Testis (tissue), 5 donors: ENCODE measurements at regions of chr11 and their contacts with region 1.

Region 1: DNA sequence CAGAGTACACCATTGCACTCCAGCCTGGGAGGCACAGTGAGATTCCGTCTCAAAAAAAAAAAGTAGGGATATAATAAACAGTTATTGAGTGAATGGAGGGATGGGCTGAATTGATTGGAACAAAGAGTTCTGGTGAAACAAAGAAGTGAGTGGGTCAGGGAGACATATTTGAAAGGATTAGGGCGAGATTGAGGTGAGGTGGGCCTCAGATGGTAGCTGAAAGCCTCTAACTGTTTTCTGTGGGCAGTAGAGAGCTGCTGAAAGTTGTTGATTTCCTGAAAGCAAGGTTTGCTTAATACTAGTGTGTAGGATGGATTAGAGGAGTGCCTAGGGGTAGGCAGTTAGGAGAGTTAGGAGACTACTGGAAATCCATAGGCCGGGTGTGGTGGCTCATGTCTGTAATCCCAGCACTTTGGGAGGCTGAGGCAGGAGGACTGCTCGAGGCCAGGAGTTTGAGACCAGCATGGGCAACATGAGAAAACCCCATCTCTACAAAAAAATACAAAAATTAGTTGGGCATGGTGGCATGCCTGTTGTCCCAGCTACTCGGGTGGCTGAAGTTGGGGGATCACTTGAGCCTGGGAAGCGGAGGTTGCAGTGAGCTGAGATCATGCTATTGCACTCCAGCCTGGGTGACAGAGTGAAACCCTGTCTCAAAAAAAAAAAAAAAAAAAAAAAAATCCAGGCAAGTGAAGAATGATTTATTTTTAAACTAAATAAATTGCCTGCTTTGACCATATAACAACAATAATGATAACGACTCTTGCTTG is 41.4 kb upstream of the PTPRJ start:
- DNase-seq: no peak
- H3K4me3 ChIP-seq: no peak overlapping the region
- H3K27ac ChIP-seq: no peak overlapping the region
- H3K4me1 ChIP-seq: no peaks in the 10 kb centered on the region
- H3K27me3 ChIP-seq: no peaks in the 10 kb centered on the region
- CTCF ChIP-seq: no peak
- POLR2A ChIP-seq: no peak

Region 2: GRCh38 chr11:48001438-48002021 is 62.6 kb after region 1 on chr11:
- intact Hi-C with region 1: no loop called
- DNase-seq: no peak
- H3K4me3 ChIP-seq: no peak overlapping the region
- H3K27ac ChIP-seq: no peak overlapping the region
- H3K4me1 ChIP-seq: no peaks in the 10 kb centered on the region
- H3K27me3 ChIP-seq: no peaks in the 10 kb centered on the region
- CTCF ChIP-seq: no peak
- POLR2A ChIP-seq: no peak

Region 3: DNA sequence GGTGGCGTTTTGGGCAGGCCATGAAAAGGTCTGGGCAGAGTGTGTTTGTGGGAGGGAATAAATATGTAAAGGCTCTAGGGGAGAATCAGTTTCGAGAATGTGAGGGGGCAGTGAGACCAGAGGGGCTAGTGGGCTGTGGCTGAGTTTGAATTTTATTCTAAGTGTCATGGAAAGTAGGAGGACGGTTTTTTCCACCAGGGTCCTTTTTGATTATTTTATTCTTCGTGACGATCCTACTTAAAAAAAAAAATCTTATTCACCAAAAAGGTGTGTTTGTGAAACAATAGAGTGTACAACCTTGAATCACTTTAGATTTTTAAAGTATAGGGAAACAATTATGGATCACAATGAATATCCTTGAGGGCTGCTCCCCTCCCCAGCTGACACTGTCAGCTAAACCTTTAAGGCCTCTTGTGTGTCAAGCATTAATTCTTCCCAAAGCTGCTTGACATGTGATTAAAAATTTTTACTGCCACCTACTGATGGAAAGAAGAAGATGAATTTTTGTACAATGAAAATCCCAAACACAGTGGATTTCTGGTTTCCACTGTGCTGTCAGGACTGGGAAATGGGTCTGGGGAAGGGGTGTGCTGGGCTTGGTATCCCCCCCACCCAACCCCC is 170.2 kb after region 1 on chr11:
- intact Hi-C with region 1: loop called (anchors 5 kb)
- DNase-seq: no peak
- H3K4me3 ChIP-seq: no peak overlapping the region
- H3K27ac ChIP-seq: no peak overlapping the region
- H3K4me1 ChIP-seq: peaks cover 7% of the 10 kb centered on the region
- H3K27me3 ChIP-seq: no peaks in the 10 kb centered on the region
- CTCF ChIP-seq: peak in 2 of 3 experiments; percentile 15 to 47
- POLR2A ChIP-seq: no peak